Endothelial cell of umbilical vein (primary cell): ENCODE measurements at regions of chr7 and their contacts with region 1.

Region 1: GRCh38 chr7:99155213-99155612 is 11.3 kb upstream of the SMURF1 start:
- DNase-seq: peak; percentile 32
- H3K4me3 ChIP-seq: no peak overlapping the region
- H3K27ac ChIP-seq: no peak overlapping the region
- H3K4me1 ChIP-seq: no peaks in the 10 kb centered on the region
- H3K27me3 ChIP-seq: peaks cover 5 to 12% of the 10 kb centered on the region in 2 experiments
- CTCF ChIP-seq: no peak
- POLR2A ChIP-seq: no peak

Region 2: GRCh38 chr7:98968621-98969020 is 186.6 kb before region 1 on chr7:
- CTCF ChIA-PET with region 1: no interaction called
- POLR2A ChIA-PET with region 1: no interaction called
- dilution Hi-C with region 1: no loop called
- intact Hi-C with region 1: no loop called
- DNase-seq: no peak
- H3K4me3 ChIP-seq: no peak overlapping the region
- H3K27ac ChIP-seq: no peak overlapping the region
- H3K4me1 ChIP-seq: no peaks in the 10 kb centered on the region
- H3K27me3 ChIP-seq: no peaks in the 10 kb centered on the region
- CTCF ChIP-seq: no peak
- POLR2A ChIP-seq: no peak

Region 3: DNA sequence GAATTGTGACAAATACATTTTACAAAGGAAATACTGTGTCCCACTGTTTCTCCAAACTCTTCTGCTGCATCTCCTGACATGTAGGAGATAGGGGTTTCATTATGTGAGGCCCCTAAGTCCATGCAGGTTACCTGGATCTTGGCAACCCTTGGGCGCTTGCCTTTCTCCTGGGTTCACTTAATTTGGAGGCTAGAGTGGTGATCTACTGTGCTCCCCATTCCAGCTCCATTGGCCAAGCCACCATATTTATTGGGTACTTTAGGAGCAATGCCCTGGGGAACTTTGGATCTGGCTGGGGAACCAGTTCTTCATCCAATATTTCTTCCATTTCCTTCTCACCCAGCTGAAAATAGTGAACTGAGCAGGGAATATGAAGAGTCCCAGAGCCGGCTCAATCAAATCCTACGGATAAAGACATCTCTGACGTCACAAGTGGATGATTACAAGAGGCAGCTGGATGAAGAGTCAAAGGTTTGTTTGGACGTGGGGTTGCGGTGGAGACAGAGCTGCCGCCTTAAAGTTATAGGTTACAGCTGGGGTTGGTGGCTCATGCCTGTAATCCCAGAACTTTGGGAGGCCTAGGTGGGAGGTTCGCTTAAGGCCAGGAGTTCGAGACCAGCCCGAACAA is 135.9 kb after region 1 on chr7:
- CTCF ChIA-PET with region 1: no interaction called
- POLR2A ChIA-PET with region 1: no interaction called
- dilution Hi-C with region 1: no loop called
- intact Hi-C with region 1: loop called (anchors 10 kb)
- DNase-seq: no peak
- H3K4me3 ChIP-seq: no peak overlapping the region
- H3K27ac ChIP-seq: no peak overlapping the region
- H3K4me1 ChIP-seq: no peaks in the 10 kb centered on the region
- H3K27me3 ChIP-seq: no peaks in the 10 kb centered on the region
- CTCF ChIP-seq: no peak
- POLR2A ChIP-seq: no peak